OCI-LY7 (cell line): ENCODE measurements at regions of chr12 and their contacts with region 1.

Region 1: GRCh38 chr12:132523576-132524331 is 33.8 kb downstream of the FBRSL1 start:
- DNase-seq: peak; percentile 59
- H3K4me3 ChIP-seq: no peak overlapping the region
- H3K27ac ChIP-seq: no peak overlapping the region
- H3K4me1 ChIP-seq: no peaks in the 10 kb centered on the region
- CTCF ChIP-seq: peak; percentile 85

Region 2: DNA sequence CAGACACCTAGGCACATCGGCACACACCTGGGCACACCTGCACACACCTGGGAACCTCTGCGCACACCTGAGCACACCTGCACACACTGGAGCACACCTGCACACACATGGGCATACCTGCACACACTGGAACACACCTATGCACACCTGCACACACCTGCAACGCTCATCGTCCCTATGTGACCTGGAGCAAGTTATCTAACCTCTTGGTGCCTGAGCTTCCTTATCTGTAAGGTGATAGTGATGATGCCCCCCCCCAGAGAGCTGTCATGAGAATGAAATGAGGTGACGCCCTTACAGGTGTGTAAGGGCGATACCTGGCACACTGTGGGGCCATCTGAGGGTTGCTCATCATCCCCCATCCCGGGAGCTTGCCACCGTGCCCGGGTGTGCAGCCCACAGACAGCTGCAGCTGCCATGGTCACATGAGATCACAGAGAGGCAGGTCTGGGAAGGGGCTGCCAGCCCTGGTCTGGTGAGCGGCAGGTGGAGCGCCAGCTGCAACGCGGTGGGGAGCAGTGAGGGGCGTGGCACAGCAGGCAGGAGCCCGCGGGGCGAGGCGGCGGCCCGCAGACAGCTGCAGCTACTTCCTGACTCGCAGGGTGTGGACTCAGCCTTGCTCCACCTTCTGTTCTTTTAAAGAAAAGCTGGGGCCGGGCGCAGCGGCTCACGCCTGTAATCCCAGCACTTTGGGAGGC is 93.7 kb before region 1 on chr12:
- CTCF ChIA-PET with region 1: no interaction called
- POLR2A ChIA-PET with region 1: no interaction called
- intact Hi-C with region 1: loop called (anchors 5 kb)
- DNase-seq: peak; percentile 86
- H3K4me3 ChIP-seq: peak overlapping the region; percentile 1
- H3K27ac ChIP-seq: no peak overlapping the region
- H3K4me1 ChIP-seq: peaks cover 16% of the 10 kb centered on the region
- CTCF ChIP-seq: 0 out of 2 replicates have a peak, but pooled peaks have one; percentile 27

Region 3: DNA sequence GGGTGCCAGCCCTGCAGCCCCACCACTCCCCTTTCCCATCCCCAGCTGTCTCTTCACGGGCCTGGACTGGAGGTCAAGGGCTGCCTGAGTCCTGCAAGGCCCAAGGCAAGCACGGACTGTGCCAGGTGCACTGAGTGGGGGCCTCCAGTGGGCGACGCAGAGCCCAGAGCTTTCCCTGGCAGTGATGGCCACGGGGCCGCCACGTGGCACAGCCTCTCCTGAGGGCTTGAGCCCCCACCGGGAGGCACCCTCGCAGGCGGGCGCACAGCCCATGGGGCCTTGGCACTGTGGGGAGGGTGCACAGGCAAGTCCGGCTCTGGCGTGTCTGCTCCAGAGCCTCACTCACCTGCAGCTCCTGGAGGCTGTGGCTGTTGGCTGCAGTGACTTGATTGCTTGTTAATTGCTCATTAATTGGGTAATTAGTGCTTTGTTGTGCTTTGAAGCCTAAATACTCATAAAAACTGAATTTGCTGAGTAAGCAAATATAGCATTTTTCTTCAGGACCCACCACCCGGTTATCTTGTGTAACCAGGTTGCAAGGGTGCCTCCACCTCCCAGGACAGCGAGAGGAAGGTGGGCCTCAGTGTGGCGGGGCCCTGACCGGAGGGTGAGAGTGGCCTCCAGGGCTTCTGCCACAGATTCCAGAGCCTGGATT is 14.7 kb after region 1 on chr12:
- CTCF ChIA-PET with region 1: no interaction called
- POLR2A ChIA-PET with region 1: no interaction called
- intact Hi-C with region 1: no loop called
- DNase-seq: no peak
- H3K4me3 ChIP-seq: no peak overlapping the region
- H3K27ac ChIP-seq: no peak overlapping the region
- H3K4me1 ChIP-seq: peaks cover 3% of the 10 kb centered on the region
- CTCF ChIP-seq: no peak